GM10248 (cell line): ENCODE measurements at regions of chr22 and their contacts with region 1.

Region 1: GRCh38 chr22:25402501-25403283 is 161.8 kb upstream of the GRK3 start:
- DNase-seq: peak; percentile 4
- CTCF ChIP-seq: no peak

Region 2: DNA sequence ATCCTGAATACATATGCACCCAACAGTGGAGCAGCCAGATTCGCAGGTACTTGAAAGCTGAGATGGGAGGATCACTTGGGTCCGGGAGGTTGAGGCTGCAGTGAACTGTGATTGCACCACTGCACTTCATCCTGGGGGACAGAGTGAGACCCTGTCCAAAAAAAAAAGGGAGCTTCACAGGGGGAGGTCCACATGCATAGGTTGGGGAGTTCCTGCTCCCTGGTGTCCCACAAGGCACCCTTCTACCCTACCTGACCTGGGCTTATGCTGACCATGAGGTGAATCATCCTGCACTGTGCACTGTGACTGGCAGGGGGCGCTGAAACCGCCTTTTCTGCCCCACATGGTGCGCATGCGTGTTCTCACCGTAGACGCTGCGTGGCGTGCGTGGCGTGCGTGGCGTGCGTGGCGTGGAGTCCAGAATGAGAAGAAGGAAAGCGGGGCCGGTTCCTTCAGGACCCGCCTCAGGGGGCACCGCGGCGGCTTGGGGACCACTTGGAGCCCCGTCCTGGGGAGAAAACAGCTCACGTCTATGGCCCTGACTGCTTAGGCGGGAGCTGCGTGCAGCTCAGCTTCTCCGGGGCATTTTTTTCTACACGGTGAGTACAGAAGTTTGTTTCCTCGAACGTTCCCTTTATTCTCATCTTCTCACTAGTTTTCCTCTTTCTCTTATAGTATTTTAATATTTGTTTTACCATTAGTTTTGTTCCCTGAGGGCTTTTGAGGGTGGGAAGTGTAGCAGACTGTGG is 45.2 kb after region 1 on chr22:
- CTCF ChIA-PET with region 1: interaction called, 12 read pairs
- POLR2A ChIA-PET with region 1: no interaction called
- DNase-seq: peak; percentile 95
- CTCF ChIP-seq: peak; percentile 99